Prostate gland (tissue), 2 donors: ENCODE measurements at regions of chrX and their contacts with region 1.

Region 1: DNA sequence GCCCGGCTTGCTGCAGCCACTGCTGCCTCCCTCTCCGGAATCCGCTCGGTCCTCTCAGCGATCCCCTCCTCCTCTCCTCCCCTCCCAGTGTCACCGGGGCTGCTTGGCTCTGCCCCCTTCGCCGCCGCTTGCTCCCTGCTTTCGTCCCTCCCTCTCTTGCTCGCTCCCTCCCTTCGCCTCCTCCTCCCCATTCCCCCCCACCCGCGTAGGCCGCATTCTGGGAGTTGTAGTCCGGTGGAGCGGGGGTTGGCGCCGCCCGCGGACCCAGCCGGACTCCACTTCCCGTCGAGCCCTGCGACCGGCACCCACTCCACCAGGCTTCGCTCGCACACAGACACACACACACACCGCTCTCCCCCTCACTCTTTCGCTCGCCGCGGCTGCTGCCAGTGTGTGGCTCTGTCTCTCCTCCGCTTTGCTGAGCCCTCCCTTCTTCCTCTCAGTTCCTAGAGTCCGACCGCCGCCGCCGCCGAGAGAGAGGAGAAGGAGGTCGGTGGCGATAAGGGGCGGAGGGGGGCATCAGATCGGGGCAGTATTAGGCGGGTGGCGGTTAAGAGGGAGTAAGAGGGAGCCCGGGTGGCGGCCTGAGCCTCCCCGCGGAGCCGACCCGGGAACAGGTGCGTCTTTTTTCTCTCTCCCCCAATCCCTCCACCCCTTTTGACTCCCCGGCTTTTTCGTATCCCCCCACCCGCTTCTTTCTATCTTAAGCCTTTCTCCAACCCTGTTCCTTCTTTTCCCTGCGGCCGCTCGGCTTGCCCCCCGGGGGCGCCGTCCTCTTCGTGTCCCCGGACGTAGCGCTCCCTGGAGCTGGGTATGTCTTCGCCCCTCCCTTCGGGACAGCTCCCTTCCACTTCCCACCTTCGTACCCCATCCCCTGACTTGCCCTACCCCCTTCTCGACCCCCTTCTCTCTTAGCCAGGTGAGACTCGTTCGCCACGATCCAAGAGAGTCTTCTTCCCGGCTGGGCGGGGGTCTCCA is at the start of gene BCORL1:
- DNase-seq: peak; percentile 88
- H3K4me3 ChIP-seq: no peak within 1 kb of the TSS
- H3K27ac ChIP-seq: peak within 1 kb of the TSS; percentile 53 to 56
- H3K4me1 ChIP-seq: no peaks in the 10 kb centered on the region
- H3K27me3 ChIP-seq: no peaks in the 10 kb centered on the region
- CTCF ChIP-seq: no peak
- POLR2A ChIP-seq: peak; percentile 70
- total RNA-seq, gene BCORL1: 4.4 to 25.2 TPM

Region 2: DNA sequence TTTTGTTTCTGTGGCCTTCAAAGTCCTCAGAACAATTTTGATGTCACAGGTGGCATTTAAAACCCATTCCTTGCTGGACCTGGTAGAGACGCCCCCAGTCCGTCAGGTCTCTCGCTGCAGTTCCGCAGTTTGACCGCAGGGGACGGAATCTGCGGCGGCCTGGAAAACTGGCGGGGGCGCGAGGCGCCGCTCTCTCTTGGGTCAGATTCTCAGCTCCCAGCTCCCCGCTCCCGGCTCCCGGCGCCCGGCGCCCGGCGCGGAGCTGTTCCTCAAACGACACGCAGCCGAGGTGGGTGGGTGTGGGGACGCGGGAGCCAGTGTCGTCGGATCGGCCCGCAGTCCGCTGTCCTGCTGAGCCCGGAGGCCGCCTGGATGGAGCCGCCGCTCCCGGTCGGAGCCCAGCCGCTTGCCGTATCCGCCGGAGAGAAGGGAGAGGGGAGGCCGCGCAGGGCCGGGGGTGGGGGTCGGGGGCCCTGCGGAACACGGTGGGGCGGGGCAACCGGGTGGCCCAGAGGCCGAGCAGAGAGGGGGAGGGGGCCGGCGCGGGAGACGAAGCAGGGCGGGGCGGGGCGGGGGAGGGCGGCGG is 442.4 kb before region 1 on chrX and contains the start of gene OCRL:
- intact Hi-C with region 1: no loop called
- DNase-seq: peak; percentile 47
- H3K4me3 ChIP-seq: peak within 1 kb of the TSS; percentile 54 to 56
- H3K27ac ChIP-seq: peak within 1 kb of the TSS; percentile 79 to 84
- H3K4me1 ChIP-seq: no peaks in the 10 kb centered on the region
- H3K27me3 ChIP-seq: no peaks in the 10 kb centered on the region
- CTCF ChIP-seq: peak; percentile 34 to 65 (median 60)
- POLR2A ChIP-seq: no peak
- total RNA-seq, gene OCRL: 16.7 to 77.1 TPM

Region 3: GRCh38 chrX:129931411-129932015 is 51.0 kb before region 1 on chrX:
- intact Hi-C with region 1: loop called (anchors 5 kb)
- DNase-seq: peak; percentile 85
- H3K4me3 ChIP-seq: peak overlapping the region; percentile 40 to 50
- H3K27ac ChIP-seq: peak overlapping the region; percentile 85
- H3K4me1 ChIP-seq: no peaks in the 10 kb centered on the region
- H3K27me3 ChIP-seq: no peaks in the 10 kb centered on the region
- CTCF ChIP-seq: no peak
- POLR2A ChIP-seq: peak; percentile 13

Region 4: GRCh38 chrX:130055103-130055502 is 72.5 kb after region 1 on chrX:
- intact Hi-C with region 1: loop called (anchors 10 kb)
- DNase-seq: no peak
- H3K4me3 ChIP-seq: no peak overlapping the region
- H3K27ac ChIP-seq: no peak overlapping the region
- H3K4me1 ChIP-seq: no peaks in the 10 kb centered on the region
- H3K27me3 ChIP-seq: no peaks in the 10 kb centered on the region
- CTCF ChIP-seq: no peak
- POLR2A ChIP-seq: no peak

Region 5: GRCh38 chrX:130125091-130125874 is 142.7 kb after region 1 on chrX:
- intact Hi-C with region 1: no loop called
- DNase-seq: peak; percentile 57
- H3K4me3 ChIP-seq: no peak overlapping the region
- H3K27ac ChIP-seq: peak overlapping the region; percentile 39 to 50
- H3K4me1 ChIP-seq: no peaks in the 10 kb centered on the region
- H3K27me3 ChIP-seq: no peaks in the 10 kb centered on the region
- CTCF ChIP-seq: no peak
- POLR2A ChIP-seq: no peak

Region 6: DNA sequence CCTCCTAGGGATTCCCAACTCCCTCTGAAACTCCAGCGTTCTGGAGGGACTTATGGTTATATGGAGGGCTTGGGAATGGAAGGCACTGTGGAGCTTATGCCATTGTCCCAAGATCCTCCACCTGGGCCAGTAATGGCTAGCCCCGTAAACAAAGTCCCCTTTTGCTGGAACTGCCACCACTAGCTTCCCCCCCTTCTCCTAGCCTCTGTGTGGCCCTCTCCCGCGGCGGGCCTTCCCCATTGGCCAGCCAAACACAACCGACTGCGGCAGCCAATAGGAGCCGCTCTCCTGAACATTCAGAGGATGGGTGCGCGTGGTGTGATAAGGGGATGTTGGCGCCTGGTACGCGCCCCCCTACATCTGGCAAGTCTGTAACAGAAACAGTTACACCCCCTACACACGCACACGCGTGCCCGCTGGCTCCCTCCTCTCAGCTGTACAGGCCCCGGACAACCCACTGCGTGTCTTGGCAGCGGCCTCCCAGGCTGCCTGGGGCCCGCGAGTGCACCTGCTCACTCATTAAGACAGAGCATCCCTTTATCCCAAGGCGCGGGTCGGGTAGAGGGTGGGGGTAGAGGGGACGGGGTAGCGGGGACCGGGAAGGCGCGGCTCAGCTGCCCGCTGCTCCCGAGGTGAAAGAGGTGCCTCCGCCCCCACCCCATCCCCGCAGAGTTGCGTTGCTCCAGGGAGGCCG is 188.3 kb after region 1 on chrX:
- intact Hi-C with region 1: no loop called
- DNase-seq: no peak
- H3K4me3 ChIP-seq: peak overlapping the region; percentile 18 to 28
- H3K27ac ChIP-seq: no peak overlapping the region
- H3K4me1 ChIP-seq: no peaks in the 10 kb centered on the region
- H3K27me3 ChIP-seq: no peaks in the 10 kb centered on the region
- CTCF ChIP-seq: no peak
- POLR2A ChIP-seq: no peak